CD4-positive, alpha-beta T cell (primary cell): ENCODE measurements at regions of chr2 and their contacts with region 1.

Region 1: DNA sequence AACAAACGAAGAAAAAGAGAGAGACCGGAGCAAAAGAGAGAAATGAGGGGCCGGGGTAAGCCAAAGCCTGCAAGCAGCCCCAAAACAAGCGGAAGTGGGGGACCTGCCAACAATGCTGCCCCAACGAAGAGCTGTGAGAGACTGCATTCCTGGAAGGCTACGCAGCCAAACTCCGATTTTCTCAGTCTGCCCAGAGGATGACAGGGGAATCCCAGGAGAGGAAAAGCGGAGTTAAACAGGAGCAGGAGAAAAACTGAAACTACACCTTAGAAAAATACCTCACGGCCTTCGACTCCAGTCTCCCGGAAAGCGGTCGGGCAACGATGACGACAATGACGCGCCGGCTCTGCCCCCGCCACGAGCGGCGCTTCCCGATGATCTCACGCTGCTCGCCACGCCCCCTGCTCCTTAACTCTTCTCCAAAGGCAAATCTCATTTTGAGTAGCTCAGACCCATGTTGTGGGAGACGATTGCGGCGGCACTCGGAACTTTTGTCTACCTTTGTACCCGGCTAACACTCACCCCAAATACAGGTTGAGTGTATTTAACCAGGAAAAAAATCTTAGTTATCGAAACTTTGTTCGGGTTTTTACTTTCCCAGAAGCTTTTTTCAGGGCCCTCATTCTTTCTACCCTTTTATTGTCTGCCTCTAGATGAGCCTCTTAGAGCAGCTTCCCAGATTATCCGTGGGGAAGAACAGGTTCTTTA is at the start of gene C1D:
- DNase-seq: peak; percentile 82 to 96 (median 91)
- ATAC-seq: peak; percentile 91
- H3K4me3 ChIP-seq: peak within 1 kb of the TSS; percentile 78
- H3K4me3 Mint-ChIP-seq: peak within 1 kb of the TSS; percentile 93
- H3K27ac ChIP-seq: peak within 1 kb of the TSS; percentile 81 to 93
- H3K27ac Mint-ChIP-seq: peak within 1 kb of the TSS; percentile 92
- H3K4me1 ChIP-seq: peaks cover 14% of the 10 kb centered on the region
- H3K4me1 Mint-ChIP-seq: peaks cover 46% of the 10 kb centered on the region
- H3K27me3 ChIP-seq: no peaks in the 10 kb centered on the region
- H3K27me3 Mint-ChIP-seq: peaks cover 8% of the 10 kb centered on the region
- CTCF ChIP-seq: no peak
- total RNA-seq, gene C1D: 16.2 to 16.4 TPM

Region 2: GRCh38 chr2:67397143-67397986 is 665.5 kb before region 1 on chr2 and contains the start of gene ETAA1:
- CTCF ChIA-PET with region 1: no interaction called
- POLR2A ChIA-PET with region 1: no interaction called
- intact Hi-C with region 1: loop called in 1 of 2 experiments (anchors 5 kb)
- DNase-seq: peak; percentile 87 to 96 (median 91)
- ATAC-seq: peak; percentile 98
- H3K4me3 ChIP-seq: peak within 1 kb of the TSS; percentile 89
- H3K4me3 Mint-ChIP-seq: peak within 1 kb of the TSS; percentile 96
- H3K27ac ChIP-seq: peak within 1 kb of the TSS; percentile 73 to 90
- H3K27ac Mint-ChIP-seq: peak within 1 kb of the TSS; percentile 88
- H3K4me1 ChIP-seq: no peaks in the 10 kb centered on the region
- H3K4me1 Mint-ChIP-seq: peaks cover 15% of the 10 kb centered on the region
- H3K27me3 ChIP-seq: no peaks in the 10 kb centered on the region
- H3K27me3 Mint-ChIP-seq: no peaks in the 10 kb centered on the region
- CTCF ChIP-seq: no peak
- total RNA-seq, gene ETAA1: 9.6 to 10.4 TPM

Region 3: GRCh38 chr2:68970566-68971265 is 907.9 kb after region 1 on chr2:
- CTCF ChIA-PET with region 1: no interaction called
- POLR2A ChIA-PET with region 1: no interaction called
- intact Hi-C with region 1: no loop called
- DNase-seq: no peak
- ATAC-seq: no peak
- H3K4me3 ChIP-seq: no peak overlapping the region
- H3K4me3 Mint-ChIP-seq: no peak overlapping the region
- H3K27ac ChIP-seq: no peak overlapping the region
- H3K27ac Mint-ChIP-seq: no peak overlapping the region
- H3K4me1 ChIP-seq: no peaks in the 10 kb centered on the region
- H3K4me1 Mint-ChIP-seq: no peaks in the 10 kb centered on the region
- H3K27me3 ChIP-seq: peaks cover 0 to 11% of the 10 kb centered on the region in 2 experiments
- H3K27me3 Mint-ChIP-seq: peaks cover 9% of the 10 kb centered on the region
- CTCF ChIP-seq: no peak